ENCODE measurements at regions of chr6 and their contacts with region 1.

Region 1: GRCh38 chr6:37499433-37500293 is at the start of gene CCDC167:
- DNase-seq: peak; percentile 97
- H3K4me3 ChIP-seq: peak within 1 kb of the TSS; percentile 50 to 75 (median 62)
- H3K27ac ChIP-seq: peak within 1 kb of the TSS; percentile 47 to 64 (median 56)
- H3K4me1 ChIP-seq: peaks cover 0 to 10% (median 5%) of the 10 kb centered on the region in 4 donors
- H3K27me3 ChIP-seq: no peaks in the 10 kb centered on the region
- CTCF ChIP-seq: no peak
- EP300 ChIP-seq: no peak
- POLR2A ChIP-seq: no peak
- total RNA-seq, gene CCDC167: 16.0 to 36.4 (median 22.0) TPM

Region 2: GRCh38 chr6:36788768-36789167 is 710.9 kb before region 1 on chr6:
- intact Hi-C with region 1: no loop called
- DNase-seq: no peak
- H3K4me3 ChIP-seq: no peak overlapping the region
- H3K27ac ChIP-seq: no peak overlapping the region
- H3K4me1 ChIP-seq: no peaks in the 10 kb centered on the region
- H3K27me3 ChIP-seq: peaks cover 0 to 11% (median 0%) of the 10 kb centered on the region in 3 donors
- CTCF ChIP-seq: no peak
- EP300 ChIP-seq: no peak
- POLR2A ChIP-seq: no peak

Region 3: GRCh38 chr6:37432916-37433656 is 66.6 kb before region 1 on chr6 and contains the start of gene CMTR1:
- intact Hi-C with region 1: loop called (anchors 2 kb)
- DNase-seq: peak; percentile 97
- H3K4me3 ChIP-seq: peak within 1 kb of the TSS; percentile 81 to 97 (median 95)
- H3K27ac ChIP-seq: peak within 1 kb of the TSS; percentile 90 to 96 (median 94)
- H3K4me1 ChIP-seq: peaks cover 0 to 26% (median 24%) of the 10 kb centered on the region in 4 donors
- H3K27me3 ChIP-seq: no peaks in the 10 kb centered on the region
- CTCF ChIP-seq: no peak
- EP300 ChIP-seq: peak in 1 of 4 donors; percentile 53
- POLR2A ChIP-seq: peak; percentile 44 to 57
- total RNA-seq, gene CMTR1: 30.8 to 33.5 (median 33.3) TPM

Region 4: GRCh38 chr6:37582306-37582705 is 82.6 kb after region 1 on chr6:
- intact Hi-C with region 1: no loop called
- DNase-seq: no peak
- H3K4me3 ChIP-seq: no peak overlapping the region
- H3K27ac ChIP-seq: no peak overlapping the region
- H3K4me1 ChIP-seq: no peaks in the 10 kb centered on the region
- H3K27me3 ChIP-seq: peaks cover 0 to 13% (median 0%) of the 10 kb centered on the region in 3 donors
- CTCF ChIP-seq: no peak
- EP300 ChIP-seq: no peak
- POLR2A ChIP-seq: no peak

Measured in sigmoid colon (tissue), 7 donors.